Activated CD8-positive, alpha-beta memory T cell treated with anti-CD3 and anti-CD28 coated beads, Interleukin-2, amount 10 ng/mL, durations not matched to agents 7 days and 5 days (primary cell): ENCODE measurements at regions of chr3 and their contacts with region 1.

Region 1: DNA sequence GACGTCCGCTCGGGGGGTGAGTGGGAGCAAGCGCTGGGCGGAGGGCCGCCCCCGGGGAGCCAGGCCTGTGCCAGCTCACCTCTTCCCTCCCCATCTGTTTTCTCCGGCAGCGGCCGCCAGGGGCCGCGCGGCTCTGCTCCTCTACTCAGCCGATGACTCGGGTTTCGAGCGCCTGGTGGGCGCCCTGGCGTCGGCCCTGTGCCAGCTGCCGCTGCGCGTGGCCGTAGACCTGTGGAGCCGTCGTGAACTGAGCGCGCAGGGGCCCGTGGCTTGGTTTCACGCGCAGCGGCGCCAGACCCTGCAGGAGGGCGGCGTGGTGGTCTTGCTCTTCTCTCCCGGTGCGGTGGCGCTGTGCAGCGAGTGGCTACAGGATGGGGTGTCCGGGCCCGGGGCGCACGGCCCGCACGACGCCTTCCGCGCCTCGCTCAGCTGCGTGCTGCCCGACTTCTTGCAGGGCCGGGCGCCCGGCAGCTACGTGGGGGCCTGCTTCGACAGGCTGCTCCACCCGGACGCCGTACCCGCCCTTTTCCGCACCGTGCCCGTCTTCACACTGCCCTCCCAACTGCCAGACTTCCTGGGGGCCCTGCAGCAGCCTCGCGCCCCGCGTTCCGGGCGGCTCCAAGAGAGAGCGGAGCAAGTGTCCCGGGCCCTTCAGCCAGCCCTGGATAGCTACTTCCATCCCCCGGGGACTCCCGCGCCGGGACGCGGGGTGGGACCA is 632 bp upstream of the CRELD1 start:
- DNase-seq: peak; percentile 93
- ATAC-seq: peak; percentile 81
- H3K4me3 Mint-ChIP-seq: peak overlapping the region; percentile 84
- H3K27ac Mint-ChIP-seq: peak overlapping the region; percentile 93
- H3K4me1 Mint-ChIP-seq: peaks cover 32% of the 10 kb centered on the region
- H3K27me3 Mint-ChIP-seq: no peaks in the 10 kb centered on the region

Region 2: GRCh38 chr3:9373465-9373864 is 559.5 kb before region 1 on chr3:
- CTCF ChIA-PET with region 1: no interaction called
- DNase-seq: no peak
- ATAC-seq: peak; percentile 57
- H3K4me3 Mint-ChIP-seq: no peak overlapping the region
- H3K27ac Mint-ChIP-seq: peak overlapping the region; percentile 75
- H3K4me1 Mint-ChIP-seq: peaks cover 19% of the 10 kb centered on the region
- H3K27me3 Mint-ChIP-seq: no peaks in the 10 kb centered on the region

Region 3: GRCh38 chr3:9710174-9710739 is 222.7 kb before region 1 on chr3:
- CTCF ChIA-PET with region 1: no interaction called
- DNase-seq: no peak
- ATAC-seq: no peak
- H3K4me3 Mint-ChIP-seq: no peak overlapping the region
- H3K27ac Mint-ChIP-seq: no peak overlapping the region
- H3K4me1 Mint-ChIP-seq: no peaks in the 10 kb centered on the region
- H3K27me3 Mint-ChIP-seq: peaks cover 17% of the 10 kb centered on the region

Region 4: GRCh38 chr3:9843715-9844438 is 89.1 kb before region 1 on chr3 and contains the start of gene RPUSD3:
- CTCF ChIA-PET with region 1: interaction called, 27 read pairs
- DNase-seq: peak; percentile 97
- ATAC-seq: peak; percentile 99
- H3K4me3 Mint-ChIP-seq: peak within 1 kb of the TSS; percentile 98
- H3K27ac Mint-ChIP-seq: peak within 1 kb of the TSS; percentile 90
- H3K4me1 Mint-ChIP-seq: peaks cover 24% of the 10 kb centered on the region
- H3K27me3 Mint-ChIP-seq: no peaks in the 10 kb centered on the region
- total RNA-seq, gene RPUSD3: 61.7 to 77.6 TPM

Region 5: GRCh38 chr3:9902372-9903237 is 30.4 kb before region 1 on chr3 and contains the start of gene IL17RE:
- CTCF ChIA-PET with region 1: interaction called, 16 read pairs
- DNase-seq: no peak
- ATAC-seq: peak; percentile 50
- H3K4me3 Mint-ChIP-seq: no peak within 1 kb of the TSS
- H3K27ac Mint-ChIP-seq: peak within 1 kb of the TSS; percentile 25
- H3K4me1 Mint-ChIP-seq: peaks cover 25% of the 10 kb centered on the region
- H3K27me3 Mint-ChIP-seq: no peaks in the 10 kb centered on the region
- total RNA-seq, gene IL17RE: 0.68 to 1.9 TPM

Region 6: GRCh38 chr3:9946112-9947024 is 13.4 kb after region 1 on chr3:
- CTCF ChIA-PET with region 1: interaction called, 38 read pairs
- DNase-seq: peak; percentile 82
- ATAC-seq: peak; percentile 88
- H3K4me3 Mint-ChIP-seq: peak overlapping the region; percentile 70
- H3K27ac Mint-ChIP-seq: peak overlapping the region; percentile 56
- H3K4me1 Mint-ChIP-seq: peaks cover 9% of the 10 kb centered on the region
- H3K27me3 Mint-ChIP-seq: no peaks in the 10 kb centered on the region

Region 7: DNA sequence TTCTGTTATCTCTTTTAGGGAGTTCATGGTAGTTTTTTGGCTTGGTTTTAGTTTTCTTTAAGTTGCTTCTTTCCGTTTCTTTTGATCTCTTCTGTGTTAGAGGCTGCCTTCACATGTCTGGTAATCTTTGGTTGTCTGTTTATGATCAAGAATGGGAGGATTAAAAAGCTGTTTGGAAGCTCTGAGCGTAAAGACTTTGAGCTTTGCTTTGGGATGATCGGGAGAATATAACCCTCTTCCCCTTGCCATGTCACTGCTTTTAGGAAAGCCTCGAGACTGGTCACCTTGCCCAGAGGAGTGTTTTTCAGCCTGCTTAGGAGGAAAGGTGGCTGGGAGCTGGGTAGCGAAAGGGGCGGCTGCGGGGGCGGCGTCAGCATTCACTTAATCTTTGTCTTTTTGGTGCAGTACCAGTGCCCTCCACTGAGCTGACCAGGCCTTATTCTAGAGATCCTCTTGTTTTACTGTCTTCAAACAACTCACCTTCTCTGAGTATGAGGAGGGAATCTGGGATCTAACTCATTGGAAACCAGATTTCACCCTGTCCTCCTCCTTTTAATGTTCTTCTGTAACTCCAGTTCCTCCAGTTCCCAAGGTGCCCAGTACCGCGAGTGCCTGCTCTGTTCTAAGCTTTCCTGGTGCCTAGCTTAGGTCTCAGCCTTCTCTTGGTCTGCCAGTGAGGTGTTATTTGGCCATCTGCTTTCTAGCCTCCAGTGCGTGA is 330.8 kb after region 1 on chr3:
- CTCF ChIA-PET with region 1: interaction called, 20 read pairs
- DNase-seq: peak; percentile 76
- ATAC-seq: peak; percentile 97
- H3K4me3 Mint-ChIP-seq: peak overlapping the region; percentile 54
- H3K27ac Mint-ChIP-seq: peak overlapping the region; percentile 65
- H3K4me1 Mint-ChIP-seq: peaks cover 65% of the 10 kb centered on the region
- H3K27me3 Mint-ChIP-seq: no peaks in the 10 kb centered on the region